Activated CD4-positive, alpha-beta T cell treated with anti-CD3 and anti-CD28 coated beads for 36 hours (primary cell): ENCODE measurements at regions of chr3 and their contacts with region 1.

Region 1: DNA sequence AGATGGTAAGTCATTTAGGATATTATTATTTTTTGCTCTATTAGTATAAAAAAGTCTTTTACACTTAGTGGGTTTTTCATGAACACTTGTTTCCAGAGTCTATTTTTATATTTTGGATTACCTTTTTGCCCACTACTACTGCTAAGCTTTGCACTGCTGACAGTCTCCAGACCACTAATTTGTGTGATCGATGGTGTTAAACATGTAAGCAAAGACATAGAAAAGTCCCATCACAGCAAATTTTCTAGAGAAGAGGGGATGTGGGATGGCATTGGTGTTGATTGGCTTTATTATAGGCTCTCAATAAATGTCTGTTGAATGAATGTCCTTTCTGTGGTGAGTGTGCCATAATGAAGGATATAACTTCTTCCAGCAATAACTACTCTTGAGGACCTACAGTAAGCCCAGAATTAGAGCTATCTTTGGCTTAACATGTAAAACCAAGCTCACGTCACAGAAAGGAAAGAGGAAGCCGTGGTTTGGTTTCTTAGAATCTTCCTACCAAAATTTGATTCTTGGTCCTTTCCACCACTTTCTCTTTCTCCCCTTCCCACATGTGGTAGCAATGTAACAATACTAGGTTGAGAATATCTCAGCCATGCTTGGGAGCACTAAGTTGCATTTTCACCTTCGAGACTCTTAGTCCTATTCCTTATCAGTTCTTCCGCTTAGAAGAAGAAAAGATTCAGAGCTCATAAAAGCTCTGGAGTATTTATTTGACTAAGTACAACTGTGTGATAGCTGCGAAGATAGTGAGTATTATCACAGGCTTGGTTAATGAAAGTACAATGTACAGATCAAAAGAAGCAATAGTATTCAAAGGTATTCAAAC is 90.6 kb upstream of the UMPS start:
- DNase-seq: peak; percentile 29
- ATAC-seq: peak; percentile 96
- H3K4me3 Mint-ChIP-seq: peak overlapping the region; percentile 39
- H3K27ac Mint-ChIP-seq: peak overlapping the region; percentile 85
- H3K4me1 Mint-ChIP-seq: peaks cover 28% of the 10 kb centered on the region
- H3K27me3 Mint-ChIP-seq: peaks cover 5% of the 10 kb centered on the region

Region 2: GRCh38 chr3:124592621-124593441 is 46.8 kb before region 1 on chr3:
- CTCF ChIA-PET with region 1: interaction called, 3 read pairs
- POLR2A ChIA-PET with region 1: interaction called, 6 read pairs
- intact Hi-C with region 1: loop called (anchors 1 to 5 kb)
- DNase-seq: peak; percentile 50
- ATAC-seq: peak; percentile 78
- H3K4me3 Mint-ChIP-seq: no peak overlapping the region
- H3K27ac Mint-ChIP-seq: peak overlapping the region; percentile 47
- H3K4me1 Mint-ChIP-seq: peaks cover 33% of the 10 kb centered on the region
- H3K27me3 Mint-ChIP-seq: peaks cover 14% of the 10 kb centered on the region

Region 3: GRCh38 chr3:124620600-124621063 is 19.0 kb before region 1 on chr3:
- CTCF ChIA-PET with region 1: interaction called, 3 read pairs
- POLR2A ChIA-PET with region 1: no interaction called
- intact Hi-C with region 1: loop called (anchors 1 to 2 kb)
- DNase-seq: peak; percentile 40
- ATAC-seq: peak; percentile 91
- H3K4me3 Mint-ChIP-seq: no peak overlapping the region
- H3K27ac Mint-ChIP-seq: peak overlapping the region; percentile 40
- H3K4me1 Mint-ChIP-seq: peaks cover 20% of the 10 kb centered on the region
- H3K27me3 Mint-ChIP-seq: peaks cover 1% of the 10 kb centered on the region